AG04450 (cell line): ENCODE measurements at regions of chr3 and their contacts with region 1.

Region 1: DNA sequence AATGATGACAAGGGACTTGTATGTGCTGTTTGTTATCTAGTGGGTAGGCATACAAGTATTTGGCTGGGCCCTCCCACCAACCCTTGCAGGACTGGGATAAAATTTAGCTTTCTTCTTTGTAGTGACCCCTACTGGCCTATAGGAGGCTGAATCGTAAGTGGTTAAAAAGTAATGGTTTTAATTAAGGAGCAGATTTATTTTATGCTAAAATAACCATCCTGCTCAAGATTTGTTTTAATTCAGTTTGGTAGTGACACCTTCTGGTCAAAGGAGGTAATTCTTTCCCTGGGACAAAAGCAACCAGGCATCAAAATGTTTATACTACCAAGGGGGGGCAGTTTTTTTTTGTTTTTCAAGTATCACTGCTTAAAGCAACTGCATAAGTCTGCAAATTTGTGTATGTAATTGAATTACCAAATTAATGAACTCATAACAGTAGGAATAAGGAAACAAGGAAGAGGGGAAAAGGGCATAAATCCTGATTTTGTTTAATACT is 70.7 kb downstream of the TOP2B start:
- DNase-seq: peak; percentile 71
- H3K4me3 ChIP-seq: no peak overlapping the region
- H3K27ac ChIP-seq: no peak overlapping the region
- H3K27me3 ChIP-seq: no peaks in the 10 kb centered on the region
- CTCF ChIP-seq: peak; percentile 75

Region 2: GRCh38 chr3:24843955-24844354 is 750.1 kb before region 1 on chr3:
- CTCF ChIA-PET with region 1: no interaction called
- POLR2A ChIA-PET with region 1: no interaction called
- DNase-seq: no peak
- H3K4me3 ChIP-seq: no peak overlapping the region
- H3K27ac ChIP-seq: no peak overlapping the region
- H3K27me3 ChIP-seq: no peaks in the 10 kb centered on the region
- CTCF ChIP-seq: no peak

Region 3: DNA sequence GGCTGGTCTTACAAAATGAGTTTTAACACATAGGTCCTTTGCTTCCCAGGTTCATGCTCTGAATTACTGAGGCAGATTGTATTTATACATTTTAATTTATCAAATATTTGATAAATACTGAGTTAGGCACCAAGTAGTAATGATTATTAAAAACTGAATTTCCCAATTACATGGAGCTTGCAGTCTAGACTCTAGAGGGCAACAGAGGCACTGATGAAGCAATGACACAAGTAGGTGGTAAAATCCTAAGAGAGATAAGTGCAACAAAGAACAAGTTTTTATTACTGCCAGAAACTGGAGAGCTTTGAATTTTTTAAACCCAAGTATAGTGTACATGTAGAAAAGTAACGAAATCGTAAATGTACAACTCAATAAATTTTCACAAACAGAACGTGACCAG is 572.2 kb before region 1 on chr3:
- CTCF ChIA-PET with region 1: interaction called, 12 read pairs
- POLR2A ChIA-PET with region 1: no interaction called
- DNase-seq: no peak
- H3K4me3 ChIP-seq: no peak overlapping the region
- H3K27ac ChIP-seq: no peak overlapping the region
- H3K27me3 ChIP-seq: no peaks in the 10 kb centered on the region
- CTCF ChIP-seq: peak; percentile 29

Region 4: GRCh38 chr3:25573386-25574171 is 20.5 kb before region 1 on chr3:
- CTCF ChIA-PET with region 1: interaction called, 76 read pairs
- POLR2A ChIA-PET with region 1: no interaction called
- DNase-seq: no peak
- H3K4me3 ChIP-seq: no peak overlapping the region
- H3K27ac ChIP-seq: peak overlapping the region; percentile 70
- H3K27me3 ChIP-seq: no peaks in the 10 kb centered on the region
- CTCF ChIP-seq: no peak

Region 5: GRCh38 chr3:25604107-25604805 is 10.2 kb after region 1 on chr3:
- CTCF ChIA-PET with region 1: interaction called, 76 read pairs
- POLR2A ChIA-PET with region 1: interaction called, 7 read pairs
- DNase-seq: peak; percentile 33
- H3K4me3 ChIP-seq: no peak overlapping the region
- H3K27ac ChIP-seq: no peak overlapping the region
- H3K27me3 ChIP-seq: no peaks in the 10 kb centered on the region
- CTCF ChIP-seq: no peak

Region 6: GRCh38 chr3:25618028-25618427 is 24.0 kb after region 1 on chr3:
- CTCF ChIA-PET with region 1: interaction called, 23 read pairs
- POLR2A ChIA-PET with region 1: no interaction called
- DNase-seq: no peak
- H3K4me3 ChIP-seq: no peak overlapping the region
- H3K27ac ChIP-seq: no peak overlapping the region
- H3K27me3 ChIP-seq: no peaks in the 10 kb centered on the region
- CTCF ChIP-seq: no peak

Region 7: DNA sequence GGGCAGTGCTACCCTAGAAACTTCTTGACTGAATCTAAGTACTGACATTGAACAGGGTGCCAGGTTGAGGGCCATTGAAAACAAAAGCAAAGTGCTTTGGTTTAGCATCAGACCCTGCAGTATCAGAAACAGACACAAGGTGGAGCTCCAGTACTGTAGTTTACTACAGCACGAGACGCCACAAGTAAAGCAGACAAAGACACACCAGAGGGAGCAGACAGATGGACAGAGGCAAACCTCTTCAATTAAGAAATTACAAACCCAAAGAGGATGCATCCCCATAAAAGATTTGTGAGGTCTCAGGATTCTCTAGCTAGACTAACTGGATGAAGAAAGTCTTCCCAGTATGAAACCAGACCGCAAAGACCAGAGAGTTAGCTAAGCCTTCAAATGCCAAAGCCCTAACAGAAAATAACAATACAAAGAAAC is 54.1 kb after region 1 on chr3:
- CTCF ChIA-PET with region 1: interaction called, 15 read pairs
- POLR2A ChIA-PET with region 1: no interaction called
- DNase-seq: peak; percentile 56
- H3K4me3 ChIP-seq: no peak overlapping the region
- H3K27ac ChIP-seq: no peak overlapping the region
- H3K27me3 ChIP-seq: no peaks in the 10 kb centered on the region
- CTCF ChIP-seq: peak; percentile 95

Region 8: GRCh38 chr3:25751725-25752124 is 157.7 kb after region 1 on chr3:
- CTCF ChIA-PET with region 1: no interaction called
- POLR2A ChIA-PET with region 1: no interaction called
- DNase-seq: no peak
- H3K4me3 ChIP-seq: no peak overlapping the region
- H3K27ac ChIP-seq: no peak overlapping the region
- H3K27me3 ChIP-seq: no peaks in the 10 kb centered on the region
- CTCF ChIP-seq: no peak